Activated CD8-positive, alpha-beta T cell treated with anti-CD3 and anti-CD28 coated beads, Interleukin-2, amount 10 ng/mL, durations not matched to agents 7 days and 5 days (primary cell): ENCODE measurements at regions of chr1 and their contacts with region 1.

Region 1: GRCh38 chr1:154404984-154405761 is at the start of gene IL6R:
- DNase-seq: peak; percentile 72
- ATAC-seq: peak; percentile 66
- H3K4me3 Mint-ChIP-seq: peak within 1 kb of the TSS; percentile 57
- H3K27ac Mint-ChIP-seq: peak within 1 kb of the TSS; percentile 39
- H3K4me1 Mint-ChIP-seq: peaks cover 78% of the 10 kb centered on the region
- H3K27me3 Mint-ChIP-seq: peaks cover 33% of the 10 kb centered on the region
- total RNA-seq, gene IL6R: 0.16 to 0.53 TPM

Region 2: DNA sequence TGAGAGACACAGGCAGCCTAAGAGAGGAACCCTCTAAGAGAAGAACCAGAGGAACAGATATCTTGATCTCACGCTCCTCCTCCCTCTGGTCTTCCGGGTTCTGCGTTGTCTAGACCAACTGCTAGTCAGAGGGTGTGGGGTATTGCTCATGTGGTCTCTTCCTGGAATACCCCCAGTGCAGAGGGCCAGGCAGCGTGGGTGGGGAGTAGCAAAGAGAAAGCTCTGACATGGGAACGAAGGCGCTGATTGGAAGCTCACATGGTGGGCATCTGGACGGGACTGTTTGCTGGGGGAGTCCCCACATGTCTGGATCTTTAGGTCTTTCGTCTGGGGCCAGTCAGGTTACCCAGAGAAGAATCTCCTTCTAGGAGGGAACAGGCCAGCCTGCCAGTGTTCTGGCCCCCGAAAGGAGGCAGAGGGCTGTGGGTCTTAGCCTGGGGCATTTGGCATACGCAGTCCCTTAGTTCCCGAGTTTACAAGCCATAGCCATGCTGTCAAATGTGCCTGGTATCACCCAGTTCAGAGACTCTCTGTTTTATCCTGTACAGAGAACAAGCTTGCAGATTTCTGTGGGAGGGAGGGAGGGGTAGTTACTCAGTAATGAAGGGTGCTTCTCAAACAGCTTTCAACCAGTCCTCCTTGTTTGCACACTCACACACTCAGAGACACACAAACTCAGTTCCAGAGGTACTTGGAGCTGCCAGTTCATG is 18.4 kb before region 1 on chr1:
- CTCF ChIA-PET with region 1: interaction called, 5 read pairs
- POLR2A ChIA-PET with region 1: interaction called, 12 read pairs
- DNase-seq: peak; percentile 55
- ATAC-seq: peak; percentile 91
- H3K4me3 Mint-ChIP-seq: peak overlapping the region; percentile 51
- H3K27ac Mint-ChIP-seq: peak overlapping the region; percentile 88
- H3K4me1 Mint-ChIP-seq: peaks cover 26% of the 10 kb centered on the region
- H3K27me3 Mint-ChIP-seq: peaks cover 3% of the 10 kb centered on the region

Region 3: GRCh38 chr1:154419620-154420571 is 14.7 kb after region 1 on chr1:
- CTCF ChIA-PET with region 1: interaction called, 12 read pairs
- POLR2A ChIA-PET with region 1: interaction called, 4 read pairs
- DNase-seq: peak; percentile 51
- ATAC-seq: peak; percentile 67
- H3K4me3 Mint-ChIP-seq: no peak overlapping the region
- H3K27ac Mint-ChIP-seq: peak overlapping the region; percentile 66
- H3K4me1 Mint-ChIP-seq: peaks cover 23% of the 10 kb centered on the region
- H3K27me3 Mint-ChIP-seq: no peaks in the 10 kb centered on the region